ENCODE measurements at regions of chr1 and their contacts with region 1.

Region 1: DNA sequence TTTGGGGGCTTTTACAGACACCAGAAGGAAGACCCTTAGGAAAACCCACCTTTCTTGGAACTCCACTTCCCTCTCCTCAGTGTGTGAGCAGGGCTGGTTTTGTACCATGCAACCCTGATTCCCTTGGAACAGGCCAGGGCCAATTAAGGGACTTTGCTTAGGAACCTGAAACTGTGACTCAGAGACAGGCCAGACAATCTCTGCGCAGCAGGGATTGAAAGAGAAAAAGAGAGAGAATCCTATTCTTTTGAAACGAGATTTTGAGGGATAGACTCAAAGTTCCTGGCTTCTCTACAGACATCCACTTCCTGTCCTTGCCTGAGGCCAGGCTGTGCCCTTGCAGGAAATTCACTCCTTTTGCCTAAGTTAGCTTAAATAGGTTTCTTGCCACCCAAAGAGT is 23.1 kb upstream of the C1orf198 start:
- DNase-seq: peak; percentile 57
- H3K4me3 ChIP-seq: no peak overlapping the region
- H3K27ac ChIP-seq: no peak overlapping the region
- H3K4me1 ChIP-seq: no peaks in the 10 kb centered on the region
- H3K27me3 ChIP-seq: no peaks in the 10 kb centered on the region
- CTCF ChIP-seq: no peak

Region 2: GRCh38 chr1:230822092-230822581 is 69.3 kb before region 1 on chr1:
- CTCF ChIA-PET with region 1: no interaction called
- dilution Hi-C with region 1: no loop called
- in situ Hi-C with region 1: no loop called
- intact Hi-C with region 1: no loop called
- DNase-seq: no peak
- H3K4me3 ChIP-seq: no peak overlapping the region
- H3K27ac ChIP-seq: no peak overlapping the region
- H3K4me1 ChIP-seq: peaks cover 10% of the 10 kb centered on the region
- H3K27me3 ChIP-seq: no peaks in the 10 kb centered on the region
- CTCF ChIP-seq: no peak

Region 3: GRCh38 chr1:230972855-230973271 is 81.5 kb after region 1 on chr1:
- CTCF ChIA-PET with region 1: no interaction called
- dilution Hi-C with region 1: no loop called
- in situ Hi-C with region 1: no loop called
- intact Hi-C with region 1: no loop called
- DNase-seq: no peak
- H3K4me3 ChIP-seq: no peak overlapping the region
- H3K27ac ChIP-seq: no peak overlapping the region
- H3K4me1 ChIP-seq: peaks cover 6% of the 10 kb centered on the region
- H3K27me3 ChIP-seq: no peaks in the 10 kb centered on the region
- CTCF ChIP-seq: no peak

Region 4: DNA sequence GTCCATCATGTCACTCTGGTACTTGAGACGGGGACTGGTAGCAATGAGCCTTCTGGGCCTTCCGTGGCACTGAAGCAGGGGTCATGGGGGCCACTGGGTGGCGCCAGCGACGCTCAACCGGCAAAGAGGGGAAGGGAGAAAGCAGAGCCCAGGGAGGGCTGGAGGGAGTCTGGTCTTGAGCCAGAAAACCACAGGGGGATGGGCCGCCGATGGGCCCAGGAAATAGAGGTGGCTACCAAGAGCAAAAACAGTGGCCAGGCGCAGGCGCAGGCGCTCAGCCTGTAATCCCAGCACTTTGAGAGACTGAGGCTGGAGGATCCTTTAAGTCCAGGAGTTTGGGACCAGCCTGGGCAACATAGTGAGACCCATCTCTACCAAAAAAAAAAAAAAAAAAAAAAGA is 424.5 kb after region 1 on chr1:
- CTCF ChIA-PET with region 1: interaction called, 26 read pairs
- dilution Hi-C with region 1: no loop called
- in situ Hi-C with region 1: no loop called
- intact Hi-C with region 1: no loop called
- DNase-seq: peak; percentile 8
- H3K4me3 ChIP-seq: no peak overlapping the region
- H3K27ac ChIP-seq: no peak overlapping the region
- H3K4me1 ChIP-seq: no peaks in the 10 kb centered on the region
- H3K27me3 ChIP-seq: no peaks in the 10 kb centered on the region
- CTCF ChIP-seq: peak; percentile 35 to 67